ENCODE measurements at regions of chr12 and their contacts with region 1.

Region 1: DNA sequence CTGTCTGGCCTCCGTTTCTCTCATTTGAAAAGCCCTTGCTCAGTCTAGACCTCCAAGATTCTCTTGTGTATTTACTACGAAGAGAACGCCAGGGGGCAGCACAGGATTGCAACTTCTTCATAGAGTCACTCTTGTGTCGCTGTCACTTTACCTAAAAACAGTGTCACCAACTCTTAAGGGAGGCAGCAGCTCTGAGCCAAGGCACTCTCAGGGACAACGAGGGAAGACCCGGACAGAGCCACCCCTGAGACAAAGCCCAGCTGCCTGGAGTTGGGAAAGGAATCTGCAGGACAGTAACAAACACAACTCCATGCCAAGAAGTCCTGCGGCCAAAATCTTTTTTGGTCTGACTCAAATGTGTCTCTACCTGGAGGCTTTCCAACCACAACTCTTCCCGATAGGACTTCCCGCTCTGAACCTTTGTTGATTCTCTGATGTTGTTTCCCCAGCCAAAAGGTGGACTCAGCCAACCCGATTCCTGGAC is 9.6 kb upstream of the RPAP3 start:
- DNase-seq: peak; percentile 79 to 87
- H3K4me3 ChIP-seq: no peak overlapping the region
- H3K27ac ChIP-seq: peak overlapping the region in 2 of 3 donors; percentile 14 to 46
- H3K4me1 ChIP-seq: peaks cover 17 to 44% of the 10 kb centered on the region in 2 donors
- H3K27me3 ChIP-seq: no peaks in the 10 kb centered on the region
- CTCF ChIP-seq: peak; percentile 53 to 89 (median 76)
- POLR2A ChIP-seq: no peak

Region 2: DNA sequence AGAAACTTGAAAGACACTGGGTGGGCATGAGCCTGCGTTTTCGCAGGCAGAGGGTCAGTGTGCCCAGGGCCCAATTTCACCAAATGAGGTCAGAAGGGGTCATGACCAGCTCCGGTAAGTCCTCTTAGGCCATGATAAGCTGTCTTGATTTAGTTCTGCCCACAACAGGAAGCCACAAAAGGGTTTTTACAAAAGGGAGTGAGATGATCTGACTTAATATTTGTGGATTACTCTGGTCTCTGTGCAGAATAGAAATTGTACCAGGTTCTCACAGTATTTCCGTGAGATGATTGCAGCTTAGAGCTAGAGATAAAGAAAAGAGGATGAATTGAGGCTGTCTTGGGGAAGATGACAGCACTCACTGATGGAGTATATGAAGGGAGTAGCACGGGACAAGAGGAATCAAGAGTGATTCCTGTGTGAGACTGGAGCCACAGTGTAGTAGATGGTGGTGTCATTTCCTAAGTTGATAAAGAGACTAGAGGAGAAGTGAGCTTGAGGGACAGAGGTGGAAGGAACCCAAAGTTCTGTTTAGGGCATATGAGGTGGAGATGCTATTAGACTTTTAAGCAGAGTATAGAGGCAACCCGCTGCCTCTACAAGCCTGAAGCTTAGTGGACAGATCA is 347.4 kb before region 1 on chr12:
- intact Hi-C with region 1: no loop called
- DNase-seq: no peak
- H3K4me3 ChIP-seq: no peak overlapping the region
- H3K27ac ChIP-seq: no peak overlapping the region
- H3K4me1 ChIP-seq: no peaks in the 10 kb centered on the region
- H3K27me3 ChIP-seq: no peaks in the 10 kb centered on the region
- CTCF ChIP-seq: no peak
- POLR2A ChIP-seq: no peak

Region 3: DNA sequence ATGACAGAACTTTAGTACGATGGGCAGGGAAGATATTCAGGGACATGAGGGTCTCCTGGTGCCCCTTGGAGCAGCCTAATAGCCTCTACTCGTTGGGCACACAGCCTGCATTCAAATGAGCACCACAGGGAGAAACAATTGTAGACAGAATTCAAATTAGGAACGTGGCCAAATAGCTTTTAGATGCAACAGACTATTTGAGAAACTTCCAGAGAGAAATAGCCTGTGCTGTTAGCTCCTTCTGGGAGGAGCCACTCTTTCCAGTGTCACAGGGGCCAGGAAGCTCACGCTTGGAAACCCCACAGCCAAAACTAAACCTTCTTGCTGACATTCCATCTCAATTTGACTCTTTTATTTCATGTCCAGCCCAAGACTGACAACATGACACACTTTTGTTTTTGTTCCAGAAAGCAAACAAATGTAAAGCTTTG is 124.1 kb before region 1 on chr12:
- intact Hi-C with region 1: no loop called
- DNase-seq: no peak
- H3K4me3 ChIP-seq: no peak overlapping the region
- H3K27ac ChIP-seq: no peak overlapping the region
- H3K4me1 ChIP-seq: peaks cover 0 to 6% of the 10 kb centered on the region in 2 donors
- H3K27me3 ChIP-seq: no peaks in the 10 kb centered on the region
- CTCF ChIP-seq: no peak
- POLR2A ChIP-seq: no peak

Region 4: DNA sequence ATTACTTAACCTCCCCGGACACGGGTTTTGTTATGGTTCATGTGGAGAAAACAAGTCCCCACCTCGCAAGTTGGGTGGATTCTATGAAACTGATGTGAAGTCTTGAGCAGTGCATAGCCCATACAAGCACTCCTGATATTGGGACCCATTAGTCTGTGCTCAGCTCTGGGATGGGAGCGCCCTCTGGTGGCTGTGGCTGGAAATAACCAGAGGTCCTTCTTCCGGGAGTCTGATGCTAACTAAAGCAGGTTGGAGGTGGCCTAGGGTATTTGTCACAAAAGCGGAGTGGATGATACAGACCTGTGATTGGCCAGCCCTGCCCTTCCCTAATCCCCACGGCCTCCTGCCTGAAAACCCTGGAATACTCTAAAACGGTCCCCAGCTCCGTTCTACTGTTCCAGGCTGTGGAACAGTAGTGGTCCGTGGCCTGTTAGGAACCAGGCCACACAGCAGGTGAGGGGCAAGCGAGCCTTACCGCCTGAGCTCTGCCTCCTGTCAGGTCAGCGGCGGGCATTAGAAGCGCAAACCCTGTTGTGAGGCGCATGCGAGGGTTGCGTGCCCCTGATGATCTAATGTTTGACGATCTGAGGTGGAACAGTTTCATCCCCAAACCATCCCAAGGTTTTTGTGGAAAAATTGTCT is 64.0 kb after region 1 on chr12:
- intact Hi-C with region 1: loop called (anchors 2 kb)
- DNase-seq: peak; percentile 85 to 89
- H3K4me3 ChIP-seq: no peak overlapping the region
- H3K27ac ChIP-seq: peak overlapping the region in 2 of 3 donors; percentile 28 to 91
- H3K4me1 ChIP-seq: peaks cover 47 to 58% of the 10 kb centered on the region in 2 donors
- H3K27me3 ChIP-seq: no peaks in the 10 kb centered on the region
- CTCF ChIP-seq: peak; percentile 77 to 96 (median 94)
- POLR2A ChIP-seq: no peak

Region 5: DNA sequence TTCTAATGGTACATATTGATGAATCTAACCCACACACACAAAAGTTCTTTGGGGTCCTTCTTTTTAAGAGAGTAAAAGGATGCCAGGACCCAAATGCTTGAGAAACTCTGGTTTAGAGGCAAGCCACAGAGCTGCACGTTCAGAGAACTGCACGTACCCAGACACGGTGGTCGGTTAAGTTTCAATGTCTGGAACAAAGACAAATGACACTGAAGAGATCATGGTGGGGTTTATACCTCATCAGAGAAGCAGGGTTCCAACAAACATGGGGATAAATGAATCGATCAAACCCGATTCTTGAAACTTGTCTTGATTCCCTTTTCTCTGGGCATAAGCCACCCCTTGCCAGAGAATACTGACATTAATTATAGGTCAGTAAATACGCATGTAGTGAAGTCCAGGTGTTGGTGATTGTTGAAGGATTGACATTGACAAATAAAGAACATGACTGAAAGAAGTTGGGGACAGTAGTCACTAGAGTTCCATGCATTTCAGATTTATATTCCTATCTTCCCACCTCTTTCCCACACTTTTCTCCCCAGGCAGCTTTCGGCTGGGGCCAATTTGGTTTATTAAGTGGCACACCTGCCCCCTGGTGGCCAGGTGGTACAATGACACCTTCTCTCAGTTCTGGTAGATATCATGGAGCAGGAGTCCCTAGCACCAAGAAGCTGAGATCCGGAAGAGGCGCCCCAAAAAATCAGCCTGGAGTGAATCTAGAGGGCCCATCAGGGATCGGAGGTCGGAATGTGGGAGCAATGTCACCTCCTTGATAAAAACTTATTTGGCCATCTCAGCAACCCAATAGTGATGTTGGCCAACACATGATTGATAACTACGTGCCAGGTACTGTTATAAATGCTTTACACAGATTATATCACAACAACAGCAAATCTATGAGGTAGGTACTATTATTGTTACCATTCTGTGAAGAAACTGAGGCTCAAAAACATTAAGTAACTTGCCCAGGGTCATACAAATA is 122.0 kb after region 1 on chr12:
- intact Hi-C with region 1: loop called (anchors 2 kb)
- DNase-seq: peak; percentile 71 to 83
- H3K4me3 ChIP-seq: no peak overlapping the region
- H3K27ac ChIP-seq: no peak overlapping the region
- H3K4me1 ChIP-seq: peaks cover 9 to 17% of the 10 kb centered on the region in 2 donors
- H3K27me3 ChIP-seq: no peaks in the 10 kb centered on the region
- CTCF ChIP-seq: peak; percentile 85 to 95 (median 89)
- POLR2A ChIP-seq: no peak

Region 6: GRCh38 chr12:48157018-48157888 is 441.8 kb after region 1 on chr12 and contains the start of gene ASB8:
- intact Hi-C with region 1: loop called (anchors 10 kb)
- DNase-seq: peak; percentile 99
- H3K4me3 ChIP-seq: peak within 1 kb of the TSS; percentile 53 to 92 (median 78)
- H3K27ac ChIP-seq: peak within 1 kb of the TSS; percentile 65 to 92 (median 66)
- H3K4me1 ChIP-seq: peaks cover 8 to 9% of the 10 kb centered on the region in 2 donors
- H3K27me3 ChIP-seq: no peaks in the 10 kb centered on the region
- CTCF ChIP-seq: peak in 4 of 6 experiments; percentile 50 to 68 (median 52)
- POLR2A ChIP-seq: peak in 1 of 2 donors; percentile 65
- total RNA-seq, gene ASB8: 28.9 to 70.6 (median 33.4) TPM

Measured in thyroid gland (tissue), 4 donors.